Common myeloid progenitor, CD34-positive (primary cell): ENCODE measurements at regions of chr7 and their contacts with region 1.

Region 1: DNA sequence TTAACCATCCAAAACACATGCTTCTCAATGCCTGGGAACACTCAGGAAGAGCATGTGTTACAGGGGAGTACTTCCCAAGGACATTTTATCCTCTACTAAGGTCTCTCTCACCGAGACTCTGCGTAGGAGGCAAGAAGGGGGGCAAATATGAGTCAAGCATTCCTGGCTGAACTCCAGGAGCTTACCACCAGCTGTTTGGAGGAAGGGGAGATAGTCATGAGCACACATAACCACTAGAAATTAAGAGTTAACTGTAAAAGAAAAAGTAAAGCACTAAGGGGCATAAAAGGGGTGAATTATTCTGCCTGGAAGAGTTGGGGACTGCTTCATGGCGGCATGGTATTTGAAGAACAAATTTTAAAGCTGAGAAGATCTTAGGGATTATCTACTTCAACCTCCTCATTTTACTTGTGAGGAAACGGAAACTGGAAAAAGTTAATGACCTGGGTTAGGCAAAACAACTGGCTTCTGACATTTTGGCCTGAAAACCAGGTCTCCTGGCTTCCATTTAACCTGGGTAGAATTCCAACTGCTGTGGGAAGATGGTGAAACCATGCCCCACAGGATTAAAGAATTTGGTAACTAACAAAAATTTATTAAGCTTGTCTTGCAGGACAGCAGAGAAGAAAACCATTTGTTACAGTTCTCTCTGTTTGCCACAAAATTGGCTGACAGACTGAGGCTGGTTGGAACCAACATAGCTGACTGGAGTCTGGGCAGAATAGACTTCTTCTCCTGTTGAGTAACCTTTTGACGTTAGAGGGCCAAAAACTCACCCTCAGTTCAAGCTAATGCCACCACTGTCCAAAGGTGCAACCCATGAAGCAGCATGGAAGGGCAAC is 85.5 kb downstream of the SLC25A13 start:
- DNase-seq: peak; percentile 53 to 87 (median 84)
- H3K4me3 ChIP-seq: peak overlapping the region in 2 of 7 experiments; percentile 13 to 31
- H3K27ac ChIP-seq: peak overlapping the region in 1 of 2 experiments; percentile 38
- H3K4me1 ChIP-seq: peaks cover 0 to 14% (median 11%) of the 10 kb centered on the region in 4 experiments
- H3K27me3 ChIP-seq: no peaks in the 10 kb centered on the region

Region 2: GRCh38 chr7:96143495-96144259 is 92.7 kb before region 1 on chr7:
- CTCF ChIA-PET with region 1: no interaction called
- POLR2A ChIA-PET with region 1: no interaction called
- DNase-seq: no peak
- H3K4me3 ChIP-seq: no peak overlapping the region
- H3K27ac ChIP-seq: no peak overlapping the region
- H3K4me1 ChIP-seq: no peaks in the 10 kb centered on the region
- H3K27me3 ChIP-seq: no peaks in the 10 kb centered on the region

Region 3: DNA sequence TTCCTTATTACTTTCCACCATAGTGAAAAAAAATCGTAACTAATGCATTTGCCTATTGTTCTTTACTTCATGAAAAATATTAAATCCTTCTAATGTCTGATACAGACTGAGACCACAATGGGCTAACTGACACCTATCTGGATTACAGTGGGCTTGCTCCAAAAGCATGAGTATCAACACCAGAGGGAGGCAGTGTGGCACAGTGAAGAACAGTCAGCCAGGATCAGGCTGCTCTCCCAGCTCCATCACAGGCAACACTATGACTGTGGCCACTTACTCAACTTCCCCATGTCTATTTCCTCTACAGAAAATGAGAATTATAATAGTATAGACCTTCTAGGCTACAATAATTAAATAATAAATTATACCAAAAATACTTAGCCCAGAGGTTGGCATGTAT is 11.7 kb before region 1 on chr7:
- CTCF ChIA-PET with region 1: interaction called, 12 read pairs
- POLR2A ChIA-PET with region 1: no interaction called
- DNase-seq: peak; percentile 29 to 69 (median 67)
- H3K4me3 ChIP-seq: no peak overlapping the region
- H3K27ac ChIP-seq: no peak overlapping the region
- H3K4me1 ChIP-seq: no peaks in the 10 kb centered on the region
- H3K27me3 ChIP-seq: no peaks in the 10 kb centered on the region